WTC11 (cell line): ENCODE measurements at regions of chr4 and their contacts with region 1.

Region 1: DNA sequence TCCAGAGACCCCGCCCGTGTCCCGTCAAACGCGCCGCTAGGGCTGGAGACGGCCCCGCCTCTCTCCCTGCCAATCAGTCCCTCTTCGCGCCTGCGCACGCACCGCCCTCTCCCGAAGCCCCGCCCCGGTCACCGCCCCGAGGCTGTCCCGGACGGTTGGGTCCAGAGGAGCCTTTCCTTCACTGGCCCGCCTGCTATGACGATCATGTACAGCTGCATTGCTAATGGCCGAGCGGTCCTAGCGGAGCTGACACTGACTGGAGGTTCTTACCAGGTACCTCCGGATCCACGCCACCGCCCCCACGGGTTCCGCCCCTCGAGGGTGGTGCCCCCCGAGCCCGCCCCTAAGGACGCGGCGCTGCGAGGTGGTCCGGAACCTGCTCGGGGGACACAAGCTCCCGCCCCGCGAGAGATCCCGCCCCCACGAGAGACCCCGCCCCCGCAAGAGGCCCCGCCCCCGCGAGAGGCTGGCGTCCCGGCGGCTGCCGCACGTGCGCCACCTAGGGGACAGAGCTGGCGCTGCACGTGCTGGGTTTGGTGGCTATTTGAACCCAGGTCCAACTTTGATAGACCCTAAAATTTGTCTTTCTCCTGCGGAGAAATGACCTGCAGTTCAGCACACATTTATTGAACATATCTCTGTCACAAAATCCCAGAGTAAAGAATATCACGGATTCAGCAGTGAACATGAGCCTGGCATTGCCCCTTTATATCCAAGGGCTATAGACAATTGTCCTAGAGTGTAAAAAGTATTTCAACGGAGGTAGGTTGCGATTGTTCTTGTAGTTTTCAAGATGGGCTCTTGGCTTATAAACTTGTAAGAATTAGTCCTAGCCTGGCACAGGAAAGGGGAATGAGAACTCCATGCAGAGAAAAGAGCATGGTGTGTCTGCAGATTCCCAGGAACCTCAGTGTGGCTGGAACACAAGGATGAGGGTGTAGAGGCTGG is 88.7 kb downstream of the HNRNPD start:
- DNase-seq: peak; percentile 100
- ATAC-seq: peak; percentile 99
- H3K4me3 Mint-ChIP-seq: peak overlapping the region; percentile 68
- H3K27ac Mint-ChIP-seq: peak overlapping the region; percentile 31; the same call in 1 of the 2 replicates
- H3K4me1 Mint-ChIP-seq: peaks cover 14% of the 10 kb centered on the region
- H3K27me3 Mint-ChIP-seq: peaks cover 20% of the 10 kb centered on the region
- CTCF ChIP-seq: peak; percentile 94

Region 2: DNA sequence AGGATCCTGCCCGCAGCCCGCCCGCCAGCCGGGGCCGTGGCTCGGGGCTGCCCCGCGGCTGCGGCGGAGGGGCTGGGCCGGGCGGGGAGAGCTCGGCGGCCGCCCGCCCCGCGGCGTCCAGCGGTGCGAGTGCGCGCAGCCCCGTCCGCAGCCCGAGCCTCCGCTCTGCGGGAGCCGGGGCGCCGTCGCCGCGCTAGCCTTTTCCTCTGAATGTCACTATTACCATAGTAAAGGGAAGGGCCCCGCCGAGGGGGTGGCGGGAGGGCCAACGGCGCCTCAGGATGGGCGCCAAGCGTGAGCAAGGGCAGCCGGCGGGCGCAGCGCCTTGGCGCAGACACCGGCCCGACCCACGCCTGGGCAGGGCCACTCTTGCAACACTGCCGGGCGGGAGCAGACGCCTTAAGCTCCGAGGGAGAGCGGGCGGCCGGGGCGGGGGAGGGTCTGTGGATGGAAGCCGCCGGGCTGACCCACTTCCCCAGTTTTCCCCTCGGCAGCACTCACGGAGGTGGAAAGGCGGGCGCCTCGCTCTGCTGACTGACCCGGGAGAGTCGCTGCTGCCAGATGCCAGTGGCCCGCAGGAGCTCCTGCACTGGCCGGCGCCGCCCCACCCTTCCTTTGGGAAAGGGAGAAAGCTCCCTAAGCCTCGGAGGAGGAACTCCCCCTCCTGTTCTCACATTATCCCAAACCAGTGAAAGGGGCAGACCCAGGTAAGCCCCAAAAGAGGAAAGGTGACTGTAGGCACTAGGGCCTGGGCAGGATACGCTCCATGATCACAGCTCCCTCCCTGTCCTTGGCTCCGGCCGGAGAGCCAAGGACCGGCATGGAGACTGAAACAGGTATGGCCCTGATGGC is 240.8 kb before region 1 on chr4:
- CTCF ChIA-PET with region 1: interaction called, 12 read pairs
- POLR2A ChIA-PET with region 1: no interaction called
- DNase-seq: peak; percentile 80
- ATAC-seq: peak; percentile 79
- H3K4me3 Mint-ChIP-seq: peak overlapping the region; percentile 81
- H3K27ac Mint-ChIP-seq: no peak overlapping the region
- H3K4me1 Mint-ChIP-seq: peaks cover 25% of the 10 kb centered on the region
- H3K27me3 Mint-ChIP-seq: peaks cover 37% of the 10 kb centered on the region
- CTCF ChIP-seq: no peak

Region 3: GRCh38 chr4:82248903-82249632 is 36.1 kb before region 1 on chr4:
- CTCF ChIA-PET with region 1: interaction called, 13 read pairs
- POLR2A ChIA-PET with region 1: no interaction called
- DNase-seq: no peak
- ATAC-seq: no peak
- H3K4me3 Mint-ChIP-seq: no peak overlapping the region
- H3K27ac Mint-ChIP-seq: no peak overlapping the region
- H3K4me1 Mint-ChIP-seq: peaks cover 23% of the 10 kb centered on the region
- H3K27me3 Mint-ChIP-seq: no peaks in the 10 kb centered on the region
- CTCF ChIP-seq: no peak

Region 4: DNA sequence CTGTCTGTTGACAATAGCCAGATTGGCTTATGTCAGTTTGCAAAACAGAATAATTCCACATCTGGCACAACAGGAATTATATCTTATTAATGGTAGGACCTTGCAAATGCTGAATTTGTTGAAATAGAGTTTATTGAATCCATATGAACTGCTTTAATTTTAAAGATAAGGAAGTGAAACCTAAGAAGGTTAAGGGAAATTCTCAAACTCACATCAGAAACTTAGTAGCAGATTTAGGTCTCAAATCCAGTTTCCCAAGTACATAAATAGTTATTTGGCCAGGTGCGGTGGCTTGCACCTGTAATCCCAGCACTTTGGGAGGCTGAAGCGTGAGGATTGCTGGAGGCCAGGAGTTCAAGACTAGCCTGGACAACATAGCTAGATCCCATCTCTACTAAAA is 28.4 kb before region 1 on chr4:
- CTCF ChIA-PET with region 1: interaction called, 12 read pairs
- POLR2A ChIA-PET with region 1: no interaction called
- DNase-seq: no peak
- ATAC-seq: no peak
- H3K4me3 Mint-ChIP-seq: no peak overlapping the region
- H3K27ac Mint-ChIP-seq: no peak overlapping the region
- H3K4me1 Mint-ChIP-seq: no peaks in the 10 kb centered on the region
- H3K27me3 Mint-ChIP-seq: no peaks in the 10 kb centered on the region
- CTCF ChIP-seq: no peak

Region 5: DNA sequence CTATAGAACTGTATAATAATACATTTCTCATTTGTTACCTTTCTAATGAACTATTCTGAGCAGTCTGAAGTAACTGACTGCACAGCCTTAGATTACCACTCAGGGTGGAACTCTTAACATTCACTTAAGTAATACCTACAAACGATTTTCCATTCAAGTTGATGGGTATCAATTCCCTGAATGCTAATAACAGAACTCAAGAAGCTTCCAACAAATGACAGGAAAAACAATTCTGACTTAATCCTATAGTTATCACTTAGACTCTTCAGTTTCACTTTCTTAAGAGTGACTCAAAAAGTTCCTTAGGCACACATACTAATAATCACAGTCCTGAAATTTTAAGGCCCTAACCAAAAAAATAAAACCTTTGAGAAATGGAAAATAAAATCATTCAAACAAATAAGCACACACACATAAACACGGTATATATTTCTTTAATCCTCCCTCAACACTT is 67.8 kb after region 1 on chr4:
- CTCF ChIA-PET with region 1: interaction called, 17 read pairs
- POLR2A ChIA-PET with region 1: no interaction called
- DNase-seq: no peak
- ATAC-seq: no peak
- H3K4me3 Mint-ChIP-seq: no peak overlapping the region
- H3K27ac Mint-ChIP-seq: peak overlapping the region; percentile 65
- H3K4me1 Mint-ChIP-seq: no peaks in the 10 kb centered on the region
- H3K27me3 Mint-ChIP-seq: no peaks in the 10 kb centered on the region
- CTCF ChIP-seq: no peak

Region 6: GRCh38 chr4:82360298-82361177 is 75.4 kb after region 1 on chr4:
- CTCF ChIA-PET with region 1: interaction called, 15 read pairs
- POLR2A ChIA-PET with region 1: no interaction called
- DNase-seq: no peak
- ATAC-seq: peak; percentile 63
- H3K4me3 Mint-ChIP-seq: no peak overlapping the region
- H3K27ac Mint-ChIP-seq: no peak overlapping the region
- H3K4me1 Mint-ChIP-seq: peaks cover 35% of the 10 kb centered on the region
- H3K27me3 Mint-ChIP-seq: no peaks in the 10 kb centered on the region
- CTCF ChIP-seq: peak; percentile 16; the same call in 1 of the 2 replicates

Region 7: DNA sequence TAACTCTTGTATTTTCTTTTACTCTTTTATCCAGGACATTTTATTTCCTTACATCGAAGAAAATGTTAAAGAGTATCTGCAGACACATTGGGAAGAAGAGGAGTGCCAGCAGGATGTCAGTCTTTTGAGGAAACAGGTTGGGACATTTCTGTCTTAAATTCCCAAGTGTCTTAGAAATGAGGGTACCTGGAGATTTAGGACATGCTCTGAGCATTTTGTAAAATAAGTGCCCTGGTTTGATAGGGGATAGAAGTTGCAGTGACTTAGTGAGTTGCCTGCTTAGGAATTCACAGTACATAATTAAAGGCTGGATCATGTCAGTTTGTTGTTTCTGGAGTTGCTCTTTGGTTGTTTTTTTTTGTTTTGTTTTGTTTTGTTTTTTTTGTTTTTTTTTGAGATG is 162.8 kb after region 1 on chr4:
- CTCF ChIA-PET with region 1: no interaction called
- POLR2A ChIA-PET with region 1: no interaction called
- DNase-seq: no peak
- ATAC-seq: no peak
- H3K4me3 Mint-ChIP-seq: no peak overlapping the region
- H3K27ac Mint-ChIP-seq: peak overlapping the region; percentile 60; the same call in 1 of the 2 replicates
- H3K4me1 Mint-ChIP-seq: no peaks in the 10 kb centered on the region; the same call in 1 of the 2 replicates
- H3K27me3 Mint-ChIP-seq: no peaks in the 10 kb centered on the region
- CTCF ChIP-seq: no peak

Region 8: DNA sequence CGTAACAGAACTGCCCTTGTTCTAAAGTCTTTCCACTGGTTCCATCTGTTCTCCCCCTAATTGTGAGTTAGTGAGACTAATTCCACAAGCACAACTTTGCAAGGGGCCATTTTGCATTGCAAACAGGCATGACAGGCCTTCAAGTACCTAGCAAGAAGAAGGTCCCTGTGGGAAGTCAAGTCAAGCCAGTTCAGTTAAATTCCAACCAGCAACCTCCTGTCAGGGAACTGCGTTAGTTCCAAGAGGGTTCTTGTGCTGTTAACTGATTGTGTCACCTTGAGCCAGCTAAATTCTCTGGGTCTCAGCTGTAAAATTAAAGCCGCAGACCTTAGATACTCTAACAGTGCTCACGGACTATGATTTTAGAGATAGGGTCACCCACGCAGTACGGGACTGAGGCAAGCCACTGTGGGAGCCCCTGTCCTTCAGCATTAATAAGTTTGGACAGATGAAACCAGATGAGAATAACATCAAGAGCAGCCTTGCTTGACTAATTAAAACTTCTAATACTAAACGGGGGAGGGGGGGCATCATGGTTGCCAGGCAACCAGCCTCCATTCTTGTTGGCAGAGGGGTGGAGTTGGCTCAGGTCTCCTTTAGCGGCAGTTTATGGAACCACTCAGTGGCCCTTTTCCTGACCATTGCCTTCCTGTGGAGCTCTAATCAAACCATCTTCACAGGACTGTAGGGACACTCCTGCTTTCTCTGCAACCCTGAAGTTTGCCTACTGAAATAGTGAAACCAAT is 300.7 kb after region 1 on chr4:
- CTCF ChIA-PET with region 1: no interaction called
- POLR2A ChIA-PET with region 1: no interaction called
- DNase-seq: no peak
- ATAC-seq: peak; percentile 21
- H3K4me3 Mint-ChIP-seq: no peak overlapping the region
- H3K27ac Mint-ChIP-seq: peak overlapping the region; percentile 55
- H3K4me1 Mint-ChIP-seq: peaks cover 57% of the 10 kb centered on the region
- H3K27me3 Mint-ChIP-seq: no peaks in the 10 kb centered on the region
- CTCF ChIP-seq: no peak